ENCODE measurements at regions of chrX and their contacts with region 1.

Region 1: GRCh38 chrX:120790118-120790517 is 85.5 kb downstream of the CT47B1 start:
- DNase-seq: no peak

Region 2: GRCh38 chrX:121389976-121390714 is 600.0 kb after region 1 on chrX:
- intact Hi-C with region 1: no loop called
- DNase-seq: no peak

Region 3: DNA sequence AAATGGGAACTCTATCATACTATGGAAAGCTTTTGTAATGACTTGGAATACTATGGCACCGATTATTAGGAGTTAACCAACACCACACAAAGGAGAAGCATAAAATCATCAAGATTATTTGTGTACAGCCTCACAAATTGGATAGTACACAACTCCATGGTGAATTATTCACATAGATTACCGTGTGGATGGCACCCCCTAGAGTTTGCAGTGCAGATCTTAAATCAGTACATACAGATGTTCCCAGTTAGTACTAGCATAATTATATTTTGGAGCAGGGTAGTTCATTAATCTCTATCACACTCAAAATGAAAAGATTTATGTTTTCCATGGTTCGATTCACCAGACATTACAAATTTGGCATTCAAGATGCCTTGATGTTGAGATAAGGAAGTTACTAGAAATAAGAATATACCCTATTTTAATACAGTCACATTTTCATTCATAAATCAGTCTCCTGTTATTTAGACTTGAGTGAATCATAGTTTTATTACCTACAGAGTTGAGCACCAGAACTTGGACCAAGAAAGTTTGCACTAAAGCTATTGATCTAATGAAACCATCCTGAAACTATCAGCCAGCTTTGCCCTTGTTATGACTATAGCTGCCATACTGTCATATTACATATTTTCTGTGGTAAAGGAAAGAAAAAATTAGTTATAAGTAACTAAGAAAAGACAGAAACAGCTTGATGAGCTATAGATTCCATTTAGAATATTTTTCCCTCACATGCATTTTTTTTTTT is 789.1 kb after region 1 on chrX:
- intact Hi-C with region 1: loop called (anchors 5 kb)
- DNase-seq: no peak

Measured in cardiac septum (tissue), 1 donor.